MCF 10A (cell line): ENCODE measurements at regions of chr7 and their contacts with region 1.

Region 1: DNA sequence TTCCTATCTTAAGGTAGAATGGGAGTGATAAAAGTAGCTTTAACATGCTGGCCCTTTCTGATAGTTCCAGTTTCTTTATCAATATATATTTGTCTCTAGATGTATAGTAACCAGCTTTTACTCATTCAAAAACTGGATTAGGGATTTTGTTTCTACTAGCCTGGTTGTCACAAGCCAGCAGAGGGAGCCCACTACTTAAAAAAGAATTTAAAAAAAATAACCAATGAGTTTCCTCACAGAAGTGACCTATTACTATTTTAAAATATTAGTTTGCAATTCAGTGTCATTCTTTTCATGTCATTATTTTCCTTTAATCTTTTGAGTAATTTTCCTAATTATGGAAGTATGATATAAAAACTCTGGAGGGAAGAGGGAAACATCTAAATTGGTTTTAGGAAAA is 142.1 kb downstream of the PHTF2 start:
- DNase-seq: peak; percentile 44
- H3K4me3 Mint-ChIP-seq: no peak overlapping the region
- H3K27ac Mint-ChIP-seq: no peak overlapping the region
- H3K4me1 Mint-ChIP-seq: no peaks in the 10 kb centered on the region
- H3K27me3 Mint-ChIP-seq: no peaks in the 10 kb centered on the region
- CTCF ChIP-seq: peak; percentile 66

Region 2: GRCh38 chr7:77439572-77439971 is 501.1 kb before region 1 on chr7:
- CTCF ChIA-PET with region 1: no interaction called
- POLR2A ChIA-PET with region 1: no interaction called
- intact Hi-C with region 1: loop called (anchors 10 kb)
- DNase-seq: peak; percentile 76
- H3K4me3 Mint-ChIP-seq: no peak overlapping the region
- H3K27ac Mint-ChIP-seq: no peak overlapping the region
- H3K4me1 Mint-ChIP-seq: peaks cover 14% of the 10 kb centered on the region
- H3K27me3 Mint-ChIP-seq: no peaks in the 10 kb centered on the region
- CTCF ChIP-seq: peak; percentile 41

Region 3: GRCh38 chr7:77657427-77658224 is 283.0 kb before region 1 on chr7:
- CTCF ChIA-PET with region 1: interaction called, 34 read pairs
- POLR2A ChIA-PET with region 1: interaction called, 5 read pairs
- intact Hi-C with region 1: loop called (anchors 5 kb)
- DNase-seq: peak; percentile 65
- H3K4me3 Mint-ChIP-seq: no peak overlapping the region
- H3K27ac Mint-ChIP-seq: no peak overlapping the region
- H3K4me1 Mint-ChIP-seq: peaks cover 2% of the 10 kb centered on the region
- H3K27me3 Mint-ChIP-seq: no peaks in the 10 kb centered on the region
- CTCF ChIP-seq: peak; percentile 56

Region 4: DNA sequence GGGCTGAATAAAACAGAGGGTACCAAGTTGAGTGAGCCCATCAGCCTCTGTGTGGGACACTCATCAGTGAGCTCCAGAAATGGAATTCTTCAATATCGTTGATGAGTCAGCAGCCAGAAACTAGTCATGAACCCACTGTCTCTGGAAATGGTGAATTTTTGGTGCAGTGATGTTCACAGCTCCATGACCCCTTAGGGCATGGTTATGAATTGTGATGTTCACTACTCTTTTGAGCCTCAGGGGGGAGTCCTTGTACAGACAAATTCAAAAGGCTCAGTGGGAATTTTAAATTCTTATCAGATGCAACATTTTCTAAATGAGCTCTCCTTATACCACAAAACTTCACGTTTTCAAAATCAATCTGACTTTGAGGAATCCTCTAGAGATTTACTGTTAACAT is 193.6 kb after region 1 on chr7:
- CTCF ChIA-PET with region 1: no interaction called
- POLR2A ChIA-PET with region 1: no interaction called
- intact Hi-C with region 1: loop called (anchors 1 kb)
- DNase-seq: peak; percentile 44
- H3K4me3 Mint-ChIP-seq: no peak overlapping the region
- H3K27ac Mint-ChIP-seq: no peak overlapping the region
- H3K4me1 Mint-ChIP-seq: no peaks in the 10 kb centered on the region
- H3K27me3 Mint-ChIP-seq: peaks cover 68% of the 10 kb centered on the region
- CTCF ChIP-seq: peak; percentile 29

Region 5: DNA sequence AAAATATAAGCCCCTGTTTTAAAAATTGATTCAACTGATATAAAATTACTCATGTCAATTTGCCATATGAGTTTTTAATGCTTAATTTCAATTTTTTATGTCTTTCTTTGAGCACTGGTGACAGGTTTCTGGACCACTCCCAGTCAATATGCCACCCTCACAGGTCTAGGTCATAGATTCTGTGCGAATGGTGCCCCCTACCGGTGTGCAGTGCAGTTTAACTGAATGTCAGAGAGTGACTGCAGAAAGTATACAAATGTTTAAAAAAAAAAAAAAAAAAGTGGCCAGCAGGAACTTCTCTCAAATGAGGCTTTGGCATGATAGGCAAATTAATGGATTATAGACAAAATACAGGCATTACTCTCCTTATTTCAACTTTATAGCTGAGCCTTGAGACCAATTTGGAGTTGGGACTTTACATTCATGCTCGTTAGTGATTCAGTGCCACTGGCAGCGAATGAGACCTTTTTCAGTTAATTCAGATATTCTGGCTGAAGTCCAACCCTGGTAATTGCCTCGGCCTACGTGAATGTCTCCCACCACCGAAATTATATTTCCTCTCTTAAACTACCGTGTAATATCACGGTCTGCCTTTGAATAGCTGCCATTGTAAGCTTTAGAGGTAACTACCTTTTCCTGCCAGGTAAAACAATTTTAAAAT is 285.5 kb after region 1 on chr7:
- CTCF ChIA-PET with region 1: interaction called, 6 read pairs
- POLR2A ChIA-PET with region 1: no interaction called
- intact Hi-C with region 1: loop called (anchors 1 kb)
- DNase-seq: peak; percentile 50
- H3K4me3 Mint-ChIP-seq: no peak overlapping the region
- H3K27ac Mint-ChIP-seq: no peak overlapping the region
- H3K4me1 Mint-ChIP-seq: no peaks in the 10 kb centered on the region
- H3K27me3 Mint-ChIP-seq: peaks cover 44% of the 10 kb centered on the region
- CTCF ChIP-seq: peak; percentile 50

Region 6: DNA sequence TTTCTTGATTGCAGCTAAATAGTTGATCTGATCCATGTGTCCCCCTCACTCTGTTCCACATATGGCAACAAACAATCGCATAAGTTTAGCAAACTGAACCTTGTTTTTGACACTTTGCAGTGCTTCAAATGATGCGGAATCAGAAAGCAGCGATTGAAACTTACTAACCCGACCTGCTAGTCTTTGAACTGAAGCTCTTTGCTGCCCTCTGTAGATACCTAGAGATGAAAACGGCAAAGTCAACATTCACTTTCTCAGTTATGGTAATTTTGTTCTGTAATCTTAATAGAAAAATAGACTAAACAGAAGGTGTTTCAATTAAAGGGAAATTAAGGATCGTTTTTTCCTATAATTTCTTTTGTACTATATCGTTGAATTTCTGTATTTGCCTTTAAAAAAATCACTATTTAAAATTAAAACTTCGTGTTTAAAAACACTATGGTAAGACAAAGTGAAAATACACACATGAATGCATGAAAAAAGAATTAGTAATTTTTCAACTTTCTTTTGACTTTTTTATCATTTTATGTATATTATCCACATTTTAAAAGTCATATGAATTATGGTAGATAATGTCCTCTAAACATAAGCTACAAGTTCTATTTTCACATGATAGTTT is 1236.3 kb after region 1 on chr7:
- CTCF ChIA-PET with region 1: no interaction called
- POLR2A ChIA-PET with region 1: no interaction called
- intact Hi-C with region 1: loop called (anchors 5 kb)
- DNase-seq: peak; percentile 49
- H3K4me3 Mint-ChIP-seq: no peak overlapping the region
- H3K27ac Mint-ChIP-seq: no peak overlapping the region
- H3K4me1 Mint-ChIP-seq: no peaks in the 10 kb centered on the region
- H3K27me3 Mint-ChIP-seq: peaks cover 70% of the 10 kb centered on the region
- CTCF ChIP-seq: peak; percentile 56